PC-9 (cell line): ENCODE measurements at regions of chr2 and their contacts with region 1.

Region 1: DNA sequence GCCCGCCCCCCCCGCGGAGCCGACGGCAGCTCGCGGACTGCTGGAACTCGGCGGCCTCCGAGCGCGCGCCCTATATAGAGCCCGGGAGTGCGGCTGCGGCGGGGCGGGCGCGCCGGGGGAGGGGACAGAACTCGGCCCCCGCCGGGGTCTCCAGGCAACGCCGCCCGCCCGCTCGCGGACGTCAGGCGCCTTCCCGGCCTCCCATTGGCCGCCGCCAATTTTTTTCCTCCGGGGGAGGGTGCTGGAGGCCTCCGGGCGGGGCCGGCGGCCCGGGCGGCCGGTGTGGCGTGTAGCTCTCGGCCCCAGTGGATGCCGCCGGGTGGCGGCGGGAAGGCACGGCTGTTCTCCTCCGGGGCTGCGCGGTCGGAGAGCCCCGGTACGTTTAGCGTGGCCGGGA is at the start of gene ZFP36L2:
- DNase-seq: peak; percentile 88 to 99
- H3K4me3 ChIP-seq: peak within 1 kb of the TSS; percentile 72
- H3K27ac ChIP-seq: peak within 1 kb of the TSS; percentile 92
- H3K4me1 ChIP-seq: peaks cover 34% of the 10 kb centered on the region
- H3K27me3 ChIP-seq: no peaks in the 10 kb centered on the region
- CTCF ChIP-seq: no peak
- total RNA-seq, gene ZFP36L2: 31.3 and 34.3 TPM in 2 replicates

Region 2: DNA sequence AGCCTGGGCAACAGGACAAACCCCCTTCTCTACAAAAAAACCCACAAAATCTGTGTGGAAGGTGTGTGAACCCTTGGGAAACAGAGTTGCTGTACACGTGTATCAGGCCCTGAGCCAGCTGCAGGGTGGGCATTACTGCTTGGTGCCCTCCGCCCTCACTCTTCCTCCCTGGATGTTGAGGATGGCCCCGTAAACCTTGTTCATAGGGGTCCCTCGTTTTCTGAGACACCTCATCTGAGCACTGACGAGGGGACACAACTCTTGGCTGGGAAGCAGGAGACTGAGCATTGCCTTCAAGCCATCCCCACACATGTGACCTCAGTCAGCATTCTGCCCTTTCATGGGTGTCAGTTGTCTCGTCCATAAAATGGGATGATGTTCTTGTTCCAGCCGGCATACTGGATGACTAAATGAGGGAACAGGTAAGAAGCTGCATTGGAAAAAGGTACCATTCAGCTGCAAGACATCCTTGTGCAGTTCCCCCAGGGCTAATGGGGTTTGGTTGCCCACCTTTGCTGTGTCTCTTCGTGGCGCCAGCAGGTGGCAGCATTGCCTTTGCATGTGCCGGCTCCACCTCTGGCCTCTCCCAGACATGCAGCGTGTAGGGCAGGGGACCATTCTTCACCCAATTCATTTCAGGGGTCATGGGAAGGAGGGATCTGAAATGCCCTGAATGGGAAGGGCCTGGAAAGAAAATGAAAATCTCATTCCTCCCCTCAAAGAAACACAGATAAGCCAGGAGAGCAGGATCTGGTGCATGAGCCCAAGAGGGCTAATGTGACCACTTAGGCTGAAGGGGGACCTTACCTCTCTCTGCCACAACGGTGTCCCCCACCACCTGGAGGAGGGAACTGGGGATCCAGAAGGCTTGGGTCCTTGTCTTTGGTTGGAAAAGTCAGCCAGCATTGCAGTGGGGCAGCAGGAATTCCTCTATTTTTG is 397.8 kb before region 1 on chr2:
- CTCF ChIA-PET with region 1: interaction called, 4 read pairs
- POLR2A ChIA-PET with region 1: no interaction called
- intact Hi-C with region 1: loop called (anchors 1 kb)
- DNase-seq: peak; percentile 60 to 75
- H3K4me3 ChIP-seq: no peak overlapping the region
- H3K27ac ChIP-seq: no peak overlapping the region
- H3K4me1 ChIP-seq: 0 out of 2 replicates have a peak, but pooled peaks cover 7% of the 10 kb centered on the region
- H3K27me3 ChIP-seq: no peaks in the 10 kb centered on the region
- CTCF ChIP-seq: peak; percentile 99

Region 3: DNA sequence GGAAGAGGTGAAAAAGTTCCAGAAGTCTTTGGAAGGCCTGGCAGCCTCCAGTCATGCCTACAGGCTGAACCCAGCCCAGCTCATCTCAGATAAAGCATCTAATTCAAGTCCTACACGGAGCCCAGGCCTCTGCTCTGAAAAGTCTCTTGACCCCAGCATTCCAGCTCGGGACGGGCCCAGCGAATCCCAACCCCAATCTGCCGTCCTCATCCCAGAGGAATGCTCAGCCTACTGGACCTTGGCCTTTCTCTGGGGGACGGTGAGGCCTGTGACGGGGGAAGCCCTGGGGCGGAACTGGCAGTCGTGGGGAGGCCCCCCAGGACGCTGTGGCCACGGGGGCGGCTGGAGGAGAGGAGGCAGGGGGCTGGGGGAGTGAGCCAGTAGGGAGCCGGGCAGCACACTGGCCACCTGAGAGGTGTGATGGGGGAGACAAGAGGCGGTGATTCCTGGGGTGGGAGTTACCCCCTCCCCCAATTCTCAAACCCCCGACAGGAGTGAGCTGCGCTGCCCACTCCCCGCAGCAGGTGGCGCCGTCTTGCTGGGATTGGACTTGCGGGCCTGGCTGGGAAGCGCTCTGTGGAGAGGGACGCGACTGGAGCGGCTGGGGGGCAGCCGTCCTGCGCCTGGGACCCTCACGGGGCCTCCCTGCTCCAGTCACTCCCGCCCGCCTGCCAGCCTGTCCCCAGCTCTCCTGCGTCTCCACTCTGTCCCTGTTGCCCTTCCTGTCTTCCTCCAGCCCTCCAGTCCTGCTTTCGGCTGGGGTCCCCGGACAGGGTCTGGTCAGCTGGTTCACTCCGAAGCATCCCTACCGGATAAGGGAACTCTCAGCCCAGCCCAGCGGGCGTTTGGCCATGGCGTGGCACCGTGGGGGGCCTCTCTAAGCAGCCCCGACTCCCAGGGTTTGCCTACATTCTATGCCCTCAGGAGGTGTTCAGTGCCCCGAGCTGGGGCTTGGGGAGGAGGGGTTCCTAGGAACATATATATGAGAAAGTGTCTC is 251.5 kb before region 1 on chr2:
- CTCF ChIA-PET with region 1: interaction called, 6 read pairs
- POLR2A ChIA-PET with region 1: no interaction called
- intact Hi-C with region 1: loop called (anchors 1 kb)
- DNase-seq: peak in 1 of 2 experiments; percentile 76
- H3K4me3 ChIP-seq: no peak overlapping the region
- H3K27ac ChIP-seq: no peak overlapping the region
- H3K4me1 ChIP-seq: peaks cover 16% of the 10 kb centered on the region
- H3K27me3 ChIP-seq: no peaks in the 10 kb centered on the region
- CTCF ChIP-seq: peak; percentile 97

Region 4: DNA sequence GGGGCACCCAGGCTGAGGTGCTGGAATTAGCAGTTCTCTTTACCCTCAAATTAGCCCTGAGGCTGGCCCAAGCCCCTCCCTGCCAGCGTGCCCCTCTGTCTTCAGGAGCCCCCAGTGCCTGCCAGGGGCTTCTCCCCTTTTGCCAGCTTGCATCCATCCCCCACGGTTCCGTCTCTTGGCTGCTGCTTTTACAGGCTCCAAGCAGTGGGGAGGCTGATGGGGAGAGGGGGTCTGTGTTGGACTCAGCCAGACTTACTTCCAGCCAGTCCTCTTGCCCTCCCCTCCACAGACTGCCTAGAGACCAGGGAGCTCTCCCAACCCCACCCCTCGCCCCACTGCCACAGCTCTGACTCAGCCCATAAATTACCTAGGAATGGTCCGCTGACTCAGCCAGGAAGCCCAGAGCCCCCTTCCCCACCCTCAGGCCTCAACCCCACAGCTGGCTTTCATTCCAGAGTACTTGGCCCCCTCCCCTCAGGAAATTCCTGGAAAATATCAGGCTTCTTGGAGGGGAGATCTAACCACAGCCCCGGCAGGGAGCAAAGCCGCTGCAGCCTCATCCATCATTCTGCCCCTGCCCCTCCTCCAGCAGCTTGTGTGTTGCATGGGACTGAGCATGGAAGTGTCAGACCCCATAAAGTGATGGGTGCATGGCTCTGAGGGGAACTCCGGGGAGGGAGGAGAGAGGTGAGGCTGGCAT is 184.7 kb before region 1 on chr2:
- CTCF ChIA-PET with region 1: no interaction called
- POLR2A ChIA-PET with region 1: interaction called, 3 read pairs
- intact Hi-C with region 1: loop called (anchors 2 kb)
- DNase-seq: peak; percentile 93 to 95
- H3K4me3 ChIP-seq: peak overlapping the region; percentile 19; the same call in 1 of the 2 replicates
- H3K27ac ChIP-seq: peak overlapping the region; percentile 90
- H3K4me1 ChIP-seq: peaks cover 79% of the 10 kb centered on the region
- H3K27me3 ChIP-seq: no peaks in the 10 kb centered on the region
- CTCF ChIP-seq: no peak

Region 5: GRCh38 chr2:43158259-43158880 is 68.2 kb before region 1 on chr2:
- CTCF ChIA-PET with region 1: interaction called, 13 read pairs
- POLR2A ChIA-PET with region 1: interaction called, 5 read pairs
- intact Hi-C with region 1: loop called (anchors 1 kb)
- DNase-seq: peak; percentile 75 to 88
- H3K4me3 ChIP-seq: peak overlapping the region; percentile 22; the same call in 1 of the 2 replicates
- H3K27ac ChIP-seq: peak overlapping the region; percentile 95
- H3K4me1 ChIP-seq: peaks cover 55% of the 10 kb centered on the region
- H3K27me3 ChIP-seq: no peaks in the 10 kb centered on the region
- CTCF ChIP-seq: no peak

Region 6: GRCh38 chr2:43467891-43468290 is 241.3 kb after region 1 on chr2:
- CTCF ChIA-PET with region 1: no interaction called
- POLR2A ChIA-PET with region 1: interaction called, 7 read pairs
- intact Hi-C with region 1: loop called (anchors 5 kb)
- DNase-seq: peak in 1 of 2 experiments; percentile 96
- H3K4me3 ChIP-seq: 0 out of 2 replicates have a peak overlapping the region, but pooled peaks have one; percentile 9
- H3K27ac ChIP-seq: peak overlapping the region; percentile 89
- H3K4me1 ChIP-seq: peaks cover 64% of the 10 kb centered on the region
- H3K27me3 ChIP-seq: no peaks in the 10 kb centered on the region
- CTCF ChIP-seq: no peak

Region 7: GRCh38 chr2:43576981-43577892 is 350.7 kb after region 1 on chr2:
- CTCF ChIA-PET with region 1: no interaction called
- POLR2A ChIA-PET with region 1: no interaction called
- intact Hi-C with region 1: no loop called
- DNase-seq: peak; percentile 6 to 65
- H3K4me3 ChIP-seq: no peak overlapping the region
- H3K27ac ChIP-seq: no peak overlapping the region
- H3K4me1 ChIP-seq: no peaks in the 10 kb centered on the region
- H3K27me3 ChIP-seq: no peaks in the 10 kb centered on the region
- CTCF ChIP-seq: peak; percentile 87